Activated naive CD4-positive, alpha-beta T cell treated with anti-CD3 and anti-CD28 coated beads, Interleukin-2, amount 10 ng/mL, durations not matched to agents 7 days and 5 days (primary cell): ENCODE measurements at regions of chr3 and their contacts with region 1.

Region 1: DNA sequence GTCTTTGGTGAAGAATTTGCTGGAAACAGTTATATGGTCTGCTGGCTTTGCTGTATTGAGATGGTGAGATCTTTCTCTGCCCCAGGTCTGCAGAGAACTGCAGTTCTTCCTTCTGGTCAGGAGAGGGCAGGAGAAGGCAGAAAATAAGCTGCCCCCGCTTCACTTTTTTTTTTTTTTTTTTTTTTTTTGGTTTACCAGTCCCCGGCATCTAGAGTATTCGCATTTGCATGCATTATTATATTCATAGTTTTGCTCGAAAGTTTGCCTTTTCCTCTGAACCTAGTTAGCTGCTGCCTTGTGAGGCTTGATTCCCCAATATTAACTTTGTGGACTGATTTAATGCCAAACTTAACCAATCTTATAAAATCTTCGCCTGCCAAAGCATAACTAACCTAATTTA is 10.6 kb upstream of the PARL start:
- DNase-seq: peak; percentile 56
- H3K4me3 Mint-ChIP-seq: no peak overlapping the region
- H3K27ac Mint-ChIP-seq: no peak overlapping the region
- H3K4me1 Mint-ChIP-seq: no peaks in the 10 kb centered on the region
- H3K27me3 Mint-ChIP-seq: peaks cover 34% of the 10 kb centered on the region

Region 2: GRCh38 chr3:183873914-183874313 is 21.4 kb before region 1 on chr3:
- CTCF ChIA-PET with region 1: no interaction called
- DNase-seq: no peak
- H3K4me3 Mint-ChIP-seq: no peak overlapping the region
- H3K27ac Mint-ChIP-seq: no peak overlapping the region
- H3K4me1 Mint-ChIP-seq: peaks cover 23% of the 10 kb centered on the region
- H3K27me3 Mint-ChIP-seq: no peaks in the 10 kb centered on the region

Region 3: GRCh38 chr3:183884427-183885296 is 10.6 kb before region 1 on chr3 and contains the start of gene PARL:
- CTCF ChIA-PET with region 1: interaction called, 12 read pairs
- DNase-seq: peak; percentile 98
- H3K4me3 Mint-ChIP-seq: peak within 1 kb of the TSS; percentile 86
- H3K27ac Mint-ChIP-seq: peak within 1 kb of the TSS; percentile 87
- H3K4me1 Mint-ChIP-seq: peaks cover 32% of the 10 kb centered on the region
- H3K27me3 Mint-ChIP-seq: peaks cover 14% of the 10 kb centered on the region

Region 4: DNA sequence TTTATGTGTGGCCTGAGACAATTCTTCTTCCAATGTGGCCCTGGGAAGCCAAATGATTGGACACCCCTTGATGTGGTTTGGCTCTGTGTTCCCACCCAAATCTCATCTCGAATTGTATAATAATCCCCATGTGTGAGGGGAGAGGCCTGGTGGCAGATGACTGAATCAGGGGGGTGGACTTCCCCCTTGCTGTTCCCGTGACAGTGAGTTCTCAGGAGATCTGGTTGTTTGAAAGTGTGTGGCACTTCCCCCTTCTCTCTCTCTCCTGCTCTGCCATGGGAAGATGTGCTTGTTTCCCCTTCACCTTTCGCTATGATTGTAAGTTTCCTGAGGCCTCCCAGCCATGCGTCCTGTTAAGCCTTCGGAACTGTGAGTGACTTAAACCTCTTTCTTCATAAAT is 49.5 kb after region 1 on chr3:
- CTCF ChIA-PET with region 1: no interaction called
- DNase-seq: no peak
- H3K4me3 Mint-ChIP-seq: no peak overlapping the region
- H3K27ac Mint-ChIP-seq: peak overlapping the region; percentile 46
- H3K4me1 Mint-ChIP-seq: no peaks in the 10 kb centered on the region
- H3K27me3 Mint-ChIP-seq: no peaks in the 10 kb centered on the region

Region 5: GRCh38 chr3:184196536-184196935 is 301.2 kb after region 1 on chr3:
- CTCF ChIA-PET with region 1: no interaction called
- DNase-seq: no peak
- H3K4me3 Mint-ChIP-seq: no peak overlapping the region
- H3K27ac Mint-ChIP-seq: no peak overlapping the region
- H3K4me1 Mint-ChIP-seq: no peaks in the 10 kb centered on the region
- H3K27me3 Mint-ChIP-seq: peaks cover 3% of the 10 kb centered on the region